Natural killer cell (primary cell): ENCODE measurements at regions of chr14 and their contacts with region 1.

Region 1: GRCh38 chr14:95442633-95443021 is 73.8 kb downstream of the SYNE3 start:
- DNase-seq: peak; percentile 59 to 87
- ATAC-seq: peak; percentile 78 to 97 (median 97)
- H3K4me3 ChIP-seq: no peak overlapping the region
- H3K4me3 Mint-ChIP-seq: no peak overlapping the region
- H3K27ac ChIP-seq: no peak overlapping the region
- H3K27ac Mint-ChIP-seq: no peak overlapping the region
- H3K4me1 ChIP-seq: no peaks in the 10 kb centered on the region
- H3K4me1 Mint-ChIP-seq: peaks cover 0 to 6% of the 10 kb centered on the region in 2 donors
- H3K27me3 ChIP-seq: no peaks in the 10 kb centered on the region
- H3K27me3 Mint-ChIP-seq: no peaks in the 10 kb centered on the region
- CTCF ChIP-seq: peak; percentile 92

Region 2: DNA sequence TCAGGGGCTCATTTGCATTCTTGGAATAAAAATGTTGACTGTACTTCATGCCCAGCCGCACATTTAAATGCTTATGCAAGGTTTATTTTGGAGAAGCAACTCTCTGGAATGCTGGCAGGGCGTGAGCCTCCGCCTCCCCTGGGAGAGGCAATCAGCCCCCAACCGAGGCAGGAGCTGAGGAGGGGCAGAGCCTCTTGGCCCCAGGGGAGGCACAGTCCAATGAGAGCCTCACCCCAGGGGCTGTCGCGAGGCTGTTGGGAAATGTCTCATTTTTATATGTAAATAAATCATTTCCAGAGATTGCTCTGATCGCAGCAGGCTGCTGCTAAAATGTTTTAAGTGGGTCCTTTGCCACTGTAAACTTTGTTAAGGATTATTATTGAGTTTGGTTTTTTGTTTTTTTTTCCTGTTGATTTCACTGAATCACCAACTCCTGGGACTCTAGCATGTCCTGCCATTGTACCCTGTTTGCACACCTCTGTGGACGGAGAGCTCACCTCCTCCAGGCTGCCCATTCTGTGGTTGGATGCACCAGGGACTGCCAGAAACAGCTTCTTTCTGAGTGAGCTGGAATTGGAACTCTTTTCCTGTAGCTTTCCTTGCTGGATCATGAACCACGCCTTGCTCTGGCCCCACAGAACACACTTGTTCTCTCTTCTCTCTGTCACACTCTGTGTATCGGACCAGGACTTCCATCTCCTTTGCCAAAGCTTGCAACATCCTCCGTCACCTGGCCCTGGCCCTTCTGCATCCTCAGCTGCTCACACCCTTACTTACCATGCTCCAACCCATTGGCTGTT is 1562.4 kb before region 1 on chr14:
- intact Hi-C with region 1: no loop called
- DNase-seq: no peak
- ATAC-seq: no peak
- H3K4me3 ChIP-seq: no peak overlapping the region
- H3K4me3 Mint-ChIP-seq: no peak overlapping the region
- H3K27ac ChIP-seq: no peak overlapping the region
- H3K27ac Mint-ChIP-seq: no peak overlapping the region
- H3K4me1 ChIP-seq: peaks cover 5% of the 10 kb centered on the region
- H3K4me1 Mint-ChIP-seq: peaks cover 8% of the 10 kb centered on the region in 2 donors
- H3K27me3 ChIP-seq: peaks cover 4% of the 10 kb centered on the region
- H3K27me3 Mint-ChIP-seq: peaks cover 13 to 27% of the 10 kb centered on the region in 2 donors
- CTCF ChIP-seq: no peak

Region 3: GRCh38 chr14:95307402-95308062 is 135.1 kb before region 1 on chr14:
- intact Hi-C with region 1: no loop called
- DNase-seq: no peak
- ATAC-seq: no peak
- H3K4me3 ChIP-seq: no peak overlapping the region
- H3K4me3 Mint-ChIP-seq: no peak overlapping the region
- H3K27ac ChIP-seq: no peak overlapping the region
- H3K27ac Mint-ChIP-seq: no peak overlapping the region
- H3K4me1 ChIP-seq: peaks cover 6% of the 10 kb centered on the region
- H3K4me1 Mint-ChIP-seq: no peaks in the 10 kb centered on the region
- H3K27me3 ChIP-seq: no peaks in the 10 kb centered on the region
- H3K27me3 Mint-ChIP-seq: peaks cover 15 to 20% of the 10 kb centered on the region in 2 donors
- CTCF ChIP-seq: no peak

Region 4: DNA sequence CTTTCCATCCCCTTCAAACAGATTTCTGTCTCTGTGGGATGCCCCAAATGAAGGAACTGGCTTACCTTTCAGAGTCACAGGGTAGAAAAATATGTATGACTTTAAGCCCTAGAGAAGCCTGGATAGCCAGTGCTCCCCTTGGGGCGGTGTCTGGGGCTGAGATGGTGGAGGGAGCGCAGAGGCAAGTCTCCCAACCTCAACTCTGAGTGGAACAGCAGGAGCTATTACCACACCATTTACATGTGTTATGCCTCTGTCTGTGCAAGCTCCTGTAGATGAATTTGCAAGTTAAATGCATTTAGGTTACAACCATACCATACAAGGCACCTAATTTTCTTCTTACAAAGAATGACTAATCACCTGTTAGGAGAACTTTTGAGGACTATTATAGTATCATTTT is 72.6 kb before region 1 on chr14:
- intact Hi-C with region 1: no loop called
- DNase-seq: no peak
- ATAC-seq: no peak
- H3K4me3 ChIP-seq: no peak overlapping the region
- H3K4me3 Mint-ChIP-seq: no peak overlapping the region
- H3K27ac ChIP-seq: no peak overlapping the region
- H3K27ac Mint-ChIP-seq: no peak overlapping the region
- H3K4me1 ChIP-seq: no peaks in the 10 kb centered on the region
- H3K4me1 Mint-ChIP-seq: no peaks in the 10 kb centered on the region
- H3K27me3 ChIP-seq: no peaks in the 10 kb centered on the region
- H3K27me3 Mint-ChIP-seq: peaks cover 15 to 16% of the 10 kb centered on the region in 2 donors
- CTCF ChIP-seq: no peak

Region 5: GRCh38 chr14:95483309-95484165 is 40.9 kb after region 1 on chr14:
- intact Hi-C with region 1: loop called (anchors 5 kb)
- DNase-seq: no peak
- ATAC-seq: no peak
- H3K4me3 ChIP-seq: no peak overlapping the region
- H3K4me3 Mint-ChIP-seq: no peak overlapping the region
- H3K27ac ChIP-seq: no peak overlapping the region
- H3K27ac Mint-ChIP-seq: peak overlapping the region in 1 of 2 donors; percentile 63
- H3K4me1 ChIP-seq: peaks cover 35% of the 10 kb centered on the region
- H3K4me1 Mint-ChIP-seq: peaks cover 19 to 61% of the 10 kb centered on the region in 2 donors
- H3K27me3 ChIP-seq: no peaks in the 10 kb centered on the region
- H3K27me3 Mint-ChIP-seq: no peaks in the 10 kb centered on the region
- CTCF ChIP-seq: no peak

Region 6: GRCh38 chr14:95515596-95516552 is 73.2 kb after region 1 on chr14:
- intact Hi-C with region 1: no loop called
- DNase-seq: peak; percentile 87 to 93
- ATAC-seq: peak; percentile 92 to 98 (median 96)
- H3K4me3 ChIP-seq: peak overlapping the region; percentile 41
- H3K4me3 Mint-ChIP-seq: peak overlapping the region; percentile 85
- H3K27ac ChIP-seq: peak overlapping the region; percentile 74
- H3K27ac Mint-ChIP-seq: peak overlapping the region; percentile 76 to 88
- H3K4me1 ChIP-seq: peaks cover 63% of the 10 kb centered on the region
- H3K4me1 Mint-ChIP-seq: peaks cover 36 to 44% of the 10 kb centered on the region in 2 donors
- H3K27me3 ChIP-seq: no peaks in the 10 kb centered on the region
- H3K27me3 Mint-ChIP-seq: no peaks in the 10 kb centered on the region
- CTCF ChIP-seq: peak; percentile 60

Region 7: DNA sequence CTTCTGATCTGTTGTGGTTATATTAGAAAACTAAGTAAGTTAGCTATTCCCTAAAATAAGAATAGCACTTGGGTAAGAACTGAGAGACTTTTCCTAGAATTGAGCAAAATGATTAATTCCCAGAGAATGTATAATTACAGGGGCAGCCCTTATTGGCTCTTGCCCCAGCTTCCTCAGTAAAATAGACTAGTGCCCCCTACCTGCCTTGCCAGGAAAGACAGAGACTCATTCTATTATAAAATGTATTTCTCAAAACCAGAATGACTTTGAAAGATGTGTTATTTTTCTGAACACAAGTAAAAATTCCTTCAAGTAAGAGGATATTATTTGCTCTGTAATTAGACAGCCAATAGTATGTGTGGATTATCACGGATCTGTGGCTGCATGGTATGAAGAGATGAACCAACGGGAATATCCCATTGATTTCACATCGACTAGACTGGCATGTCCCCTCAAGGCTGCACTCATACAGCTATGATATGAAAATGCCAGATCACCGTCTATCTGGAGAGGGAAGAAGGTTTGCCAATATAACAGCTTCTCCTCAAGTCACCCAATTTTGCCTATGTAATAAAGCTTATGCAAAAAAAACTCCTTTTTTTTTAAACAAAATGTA is 84.9 kb after region 1 on chr14:
- intact Hi-C with region 1: loop called (anchors 1 kb)
- DNase-seq: peak in 1 of 2 donors; percentile 74
- ATAC-seq: peak in 2 of 3 donors; percentile 56 to 66
- H3K4me3 ChIP-seq: no peak overlapping the region
- H3K4me3 Mint-ChIP-seq: no peak overlapping the region
- H3K27ac ChIP-seq: no peak overlapping the region
- H3K27ac Mint-ChIP-seq: peak overlapping the region in 1 of 2 donors; percentile 9
- H3K4me1 ChIP-seq: peaks cover 21% of the 10 kb centered on the region
- H3K4me1 Mint-ChIP-seq: peaks cover 42 to 44% of the 10 kb centered on the region in 2 donors
- H3K27me3 ChIP-seq: no peaks in the 10 kb centered on the region
- H3K27me3 Mint-ChIP-seq: no peaks in the 10 kb centered on the region
- CTCF ChIP-seq: peak; percentile 90

Region 8: DNA sequence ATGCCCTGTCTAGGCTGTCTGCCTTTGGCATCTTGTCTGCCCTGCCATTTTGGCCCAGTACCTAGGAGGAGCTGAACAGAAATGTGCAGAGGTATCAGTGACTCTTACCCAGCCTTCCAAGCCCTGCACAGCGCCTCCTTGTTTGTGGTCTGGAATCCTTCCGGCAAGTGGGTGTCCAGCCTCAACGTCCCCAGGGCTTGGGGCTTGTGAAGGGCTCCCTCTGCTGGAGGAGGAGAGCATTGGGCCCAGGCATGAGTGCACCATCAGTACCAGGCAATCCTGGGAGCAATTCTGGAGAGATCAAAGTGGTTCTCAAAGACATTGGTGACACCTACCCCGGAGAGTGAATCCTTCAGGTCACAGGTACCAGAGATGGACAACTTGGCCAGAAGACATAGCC is 241.2 kb after region 1 on chr14:
- intact Hi-C with region 1: loop called (anchors 10 kb)
- DNase-seq: peak in 1 of 2 donors; percentile 58
- ATAC-seq: peak in 1 of 3 donors; percentile 50
- H3K4me3 ChIP-seq: no peak overlapping the region
- H3K4me3 Mint-ChIP-seq: no peak overlapping the region
- H3K27ac ChIP-seq: no peak overlapping the region
- H3K27ac Mint-ChIP-seq: no peak overlapping the region
- H3K4me1 ChIP-seq: no peaks in the 10 kb centered on the region
- H3K4me1 Mint-ChIP-seq: no peaks in the 10 kb centered on the region
- H3K27me3 ChIP-seq: no peaks in the 10 kb centered on the region
- H3K27me3 Mint-ChIP-seq: no peaks in the 10 kb centered on the region
- CTCF ChIP-seq: peak; percentile 40

Region 9: DNA sequence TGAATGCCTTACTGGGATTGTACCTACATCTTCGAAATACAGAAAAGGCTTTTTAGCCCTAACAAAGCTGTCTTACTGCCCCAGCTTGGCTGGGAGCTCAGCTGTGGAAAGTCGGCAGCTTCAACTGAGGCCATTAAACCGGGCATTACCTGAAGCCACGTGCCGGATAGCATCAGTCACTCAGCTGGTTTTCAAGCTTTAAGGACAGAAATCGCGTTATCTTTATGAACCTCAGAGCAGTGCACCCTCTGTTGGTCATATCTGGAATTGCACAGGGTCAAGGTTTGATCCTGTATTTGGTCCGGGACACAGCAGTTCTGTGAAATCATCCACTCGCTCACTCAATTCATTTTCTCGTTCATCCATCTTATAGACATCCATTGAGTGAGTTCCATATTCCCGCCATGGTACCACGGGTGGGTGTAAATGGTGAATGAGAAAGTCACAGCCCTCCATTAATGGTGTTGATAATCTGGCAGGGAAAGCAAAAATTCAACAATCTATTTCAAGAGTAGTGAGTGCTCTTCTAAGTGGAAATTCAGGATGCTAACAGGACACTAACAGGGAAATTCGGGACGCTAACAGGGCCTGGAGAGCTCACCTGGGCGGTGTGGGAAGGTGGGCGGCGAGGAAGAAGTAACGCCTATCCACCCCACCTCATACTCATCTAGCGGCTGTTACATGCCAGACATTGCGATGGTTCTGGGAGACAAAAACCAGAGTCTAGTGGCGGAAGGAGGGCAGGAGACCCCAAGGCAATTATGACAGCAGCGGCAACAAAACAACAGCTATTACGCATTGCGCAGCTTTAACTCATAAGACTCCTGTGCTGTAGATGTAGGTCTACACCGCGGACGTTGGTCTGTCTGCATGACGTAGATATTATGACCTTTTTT is 331.9 kb after region 1 on chr14:
- intact Hi-C with region 1: loop called (anchors 1 kb)
- DNase-seq: peak in 1 of 2 donors; percentile 71
- ATAC-seq: peak; percentile 40 to 64 (median 46)
- H3K4me3 ChIP-seq: no peak overlapping the region
- H3K4me3 Mint-ChIP-seq: no peak overlapping the region
- H3K27ac ChIP-seq: no peak overlapping the region
- H3K27ac Mint-ChIP-seq: no peak overlapping the region
- H3K4me1 ChIP-seq: no peaks in the 10 kb centered on the region
- H3K4me1 Mint-ChIP-seq: peaks cover 0 to 5% of the 10 kb centered on the region in 2 donors
- H3K27me3 ChIP-seq: no peaks in the 10 kb centered on the region
- H3K27me3 Mint-ChIP-seq: peaks cover 7 to 17% of the 10 kb centered on the region in 2 donors
- CTCF ChIP-seq: peak; percentile 88